Heart right ventricle (tissue), 16 donors: ENCODE measurements at regions of chr1 and their contacts with region 1.

Region 1: GRCh38 chr1:89022167-89022959 is at the start of gene GBP3:
- DNase-seq: no peak
- ATAC-seq: peak in 7 of 8 donors; percentile 71 to 86 (median 83)
- H3K4me3 ChIP-seq: peak within 1 kb of the TSS; percentile 19 to 69 (median 60)
- H3K27ac ChIP-seq: peak within 1 kb of the TSS; percentile 48 to 91 (median 80)
- H3K4me1 ChIP-seq: peaks cover 0 to 33% (median 8%) of the 10 kb centered on the region in 9 donors
- H3K27me3 ChIP-seq: no peaks in the 10 kb centered on the region
- CTCF ChIP-seq: no peak
- total RNA-seq, gene GBP3: 1.6 to 21.6 (median 6.3) TPM

Region 2: GRCh38 chr1:89060091-89060490 is 37.7 kb after region 1 on chr1:
- intact Hi-C with region 1: loop called in 4 of 10 experiments (anchors 2 to 5 kb)
- DNase-seq: no peak
- ATAC-seq: no peak
- H3K4me3 ChIP-seq: peak overlapping the region in 1 of 10 donors; percentile 4
- H3K27ac ChIP-seq: no peak overlapping the region
- H3K4me1 ChIP-seq: peaks cover 2 to 40% (median 14%) of the 10 kb centered on the region in 9 donors
- H3K27me3 ChIP-seq: no peaks in the 10 kb centered on the region
- CTCF ChIP-seq: no peak

Region 3: GRCh38 chr1:89065079-89065868 is 42.9 kb after region 1 on chr1 and contains the start of gene GBP1:
- intact Hi-C with region 1: loop called in 3 of 10 experiments (anchors 5 kb)
- DNase-seq: peak in 1 of 2 donors; percentile 57
- ATAC-seq: peak in 7 of 8 donors; percentile 89 to 95 (median 92)
- H3K4me3 ChIP-seq: peak within 1 kb of the TSS; percentile 1 to 70 (median 59)
- H3K27ac ChIP-seq: peak within 1 kb of the TSS; percentile 61 to 92 (median 86)
- H3K4me1 ChIP-seq: peaks cover 2 to 57% (median 19%) of the 10 kb centered on the region in 9 donors
- H3K27me3 ChIP-seq: no peaks in the 10 kb centered on the region
- CTCF ChIP-seq: no peak
- total RNA-seq, gene GBP1: 4.1 to 119 (median 9.0) TPM